ENCODE measurements at regions of chr19 and their contacts with region 1.

Region 1: GRCh38 chr19:16829010-16829821 is at the start of gene SIN3B:
- DNase-seq: peak; percentile 79 to 97 (median 89)
- ATAC-seq: peak; percentile 97
- H3K4me3 ChIP-seq: peak within 1 kb of the TSS; percentile 84
- H3K4me3 Mint-ChIP-seq: peak within 1 kb of the TSS; percentile 89
- H3K27ac ChIP-seq: peak within 1 kb of the TSS; percentile 55 to 59
- H3K27ac Mint-ChIP-seq: peak within 1 kb of the TSS; percentile 85
- H3K4me1 ChIP-seq: peaks cover 30% of the 10 kb centered on the region
- H3K4me1 Mint-ChIP-seq: peaks cover 39% of the 10 kb centered on the region
- H3K27me3 ChIP-seq: peaks cover 0 to 9% of the 10 kb centered on the region in 2 experiments
- H3K27me3 Mint-ChIP-seq: peaks cover 29% of the 10 kb centered on the region
- CTCF ChIP-seq: no peak
- total RNA-seq, gene SIN3B: 52.4 to 53.7 TPM

Region 2: DNA sequence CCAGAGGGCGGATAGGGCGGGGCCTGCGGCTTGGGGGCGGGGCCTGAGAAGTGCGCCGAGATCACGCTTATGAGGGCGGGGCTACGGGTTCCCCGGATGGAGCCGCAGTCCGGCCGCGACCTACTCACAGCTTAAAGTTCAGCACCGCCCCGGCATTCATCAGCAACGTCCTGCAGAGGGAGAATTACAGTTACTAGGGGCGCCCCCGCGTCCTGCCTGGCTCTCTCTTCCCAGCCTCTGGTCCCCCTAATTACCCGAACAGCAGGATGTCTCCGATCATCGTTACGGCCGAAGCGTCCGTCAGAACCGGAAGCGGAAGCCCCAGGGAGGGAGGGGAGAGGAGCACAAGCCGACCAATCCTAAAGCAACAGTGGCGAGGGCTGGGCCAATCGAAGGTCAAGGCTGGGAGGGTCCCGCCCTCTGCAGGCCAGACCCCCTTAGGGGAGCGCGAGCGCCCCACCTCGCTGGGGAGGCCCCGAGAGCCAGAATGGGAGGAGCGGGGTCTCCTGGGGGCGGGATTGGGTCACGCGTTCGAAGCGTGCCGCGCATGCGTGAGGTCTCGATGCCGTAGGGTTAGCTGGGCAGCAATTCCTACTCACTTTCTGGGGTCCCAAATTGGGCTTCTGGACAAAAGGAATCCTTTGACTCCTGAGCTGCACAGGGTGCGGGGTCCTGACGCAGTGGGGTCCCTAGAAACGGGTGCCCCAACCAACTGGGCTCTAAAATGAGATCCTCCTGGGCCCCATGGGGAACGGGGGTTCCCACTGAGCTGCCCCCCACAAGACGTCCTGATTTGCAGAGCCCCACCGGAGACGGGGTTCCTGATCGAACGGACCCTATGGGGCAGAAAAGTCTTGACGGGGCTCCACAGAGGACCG is 169.1 kb before region 1 on chr19 and contains the start of gene SMIM7:
- CTCF ChIA-PET with region 1: no interaction called
- POLR2A ChIA-PET with region 1: no interaction called
- intact Hi-C with region 1: loop called in 1 of 2 experiments (anchors 2 kb)
- DNase-seq: peak; percentile 97 to 100 (median 98)
- ATAC-seq: peak; percentile 96
- H3K4me3 ChIP-seq: peak within 1 kb of the TSS; percentile 92
- H3K4me3 Mint-ChIP-seq: peak within 1 kb of the TSS; percentile 100
- H3K27ac ChIP-seq: peak within 1 kb of the TSS; percentile 75 to 93
- H3K27ac Mint-ChIP-seq: peak within 1 kb of the TSS; percentile 98
- H3K4me1 ChIP-seq: peaks cover 51% of the 10 kb centered on the region
- H3K4me1 Mint-ChIP-seq: peaks cover 50% of the 10 kb centered on the region
- H3K27me3 ChIP-seq: no peaks in the 10 kb centered on the region
- H3K27me3 Mint-ChIP-seq: no peaks in the 10 kb centered on the region
- CTCF ChIP-seq: no peak
- total RNA-seq, gene SMIM7: 44.3 to 47.4 TPM